ENCODE measurements at regions of chr19 and their contacts with region 1.

Region 1: DNA sequence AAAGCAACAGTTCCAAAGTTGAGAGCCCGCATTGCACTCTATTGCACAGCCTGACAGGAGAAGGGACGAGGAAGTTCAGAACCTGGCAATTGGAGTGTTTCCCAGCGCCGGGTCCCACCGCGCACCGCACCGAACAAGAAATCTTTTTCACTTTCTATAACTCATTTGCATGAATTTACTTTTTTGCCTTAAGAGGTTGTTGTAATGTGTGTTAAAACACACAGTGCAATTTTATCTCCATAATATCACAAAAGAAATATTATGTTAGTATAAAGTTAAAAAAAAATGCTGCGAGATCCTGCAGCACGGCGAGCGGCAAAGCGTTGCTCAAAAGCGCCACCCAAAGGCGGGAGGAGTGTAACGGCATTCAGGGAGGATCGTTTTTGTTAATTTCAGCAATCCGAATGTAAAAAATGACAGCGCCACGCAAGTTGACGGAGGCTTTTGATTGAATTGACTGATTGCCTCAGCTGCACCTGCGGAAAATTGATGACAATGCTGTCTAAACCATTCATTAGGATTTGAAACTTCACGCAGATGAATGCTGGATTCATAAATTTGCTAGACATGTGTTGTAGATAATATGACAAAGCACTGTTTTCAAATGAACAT is 303.6 kb upstream of the ZNF507 start:
- H3K4me3 ChIP-seq: peak overlapping the region; percentile 20
- H3K27ac ChIP-seq: no peak overlapping the region
- H3K4me1 ChIP-seq: peaks cover 8% of the 10 kb centered on the region
- CTCF ChIP-seq: peak; percentile 88

Region 2: GRCh38 chr19:32053376-32053775 is 11.6 kb after region 1 on chr19:
- CTCF ChIA-PET with region 1: interaction called, 35 read pairs
- POLR2A ChIA-PET with region 1: no interaction called
- H3K4me3 ChIP-seq: no peak overlapping the region
- H3K27ac ChIP-seq: no peak overlapping the region
- H3K4me1 ChIP-seq: no peaks in the 10 kb centered on the region
- CTCF ChIP-seq: no peak

Region 3: DNA sequence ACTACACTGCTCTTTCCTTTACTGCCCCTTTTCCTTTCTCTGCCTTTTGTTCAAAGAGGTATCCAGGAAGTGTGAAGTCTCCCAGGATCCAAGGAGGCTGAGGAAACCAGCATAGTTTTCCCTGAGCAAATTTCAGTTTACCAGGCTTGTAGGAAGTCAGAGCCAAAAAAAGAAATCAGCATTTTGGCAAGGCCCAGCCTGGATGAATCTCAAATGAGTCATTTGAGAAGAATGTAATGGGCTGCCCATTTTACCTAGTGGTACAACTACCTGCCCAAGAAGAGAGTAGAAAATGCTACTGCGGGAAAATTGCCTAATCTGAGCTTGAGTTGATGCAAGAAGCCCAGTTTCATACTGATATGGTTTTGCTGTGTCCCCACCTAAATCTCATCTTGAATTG is 19.5 kb after region 1 on chr19:
- CTCF ChIA-PET with region 1: interaction called, 19 read pairs
- POLR2A ChIA-PET with region 1: no interaction called
- H3K4me3 ChIP-seq: no peak overlapping the region
- H3K27ac ChIP-seq: no peak overlapping the region
- H3K4me1 ChIP-seq: no peaks in the 10 kb centered on the region
- CTCF ChIP-seq: no peak

Region 4: GRCh38 chr19:32091241-32091640 is 49.5 kb after region 1 on chr19:
- CTCF ChIA-PET with region 1: no interaction called
- POLR2A ChIA-PET with region 1: no interaction called
- H3K4me3 ChIP-seq: no peak overlapping the region
- H3K27ac ChIP-seq: no peak overlapping the region
- H3K4me1 ChIP-seq: peaks cover 8% of the 10 kb centered on the region
- CTCF ChIP-seq: no peak

Measured in HEK293 (cell line).